ENCODE measurements at regions of chr7 and their contacts with region 1.

Region 1: DNA sequence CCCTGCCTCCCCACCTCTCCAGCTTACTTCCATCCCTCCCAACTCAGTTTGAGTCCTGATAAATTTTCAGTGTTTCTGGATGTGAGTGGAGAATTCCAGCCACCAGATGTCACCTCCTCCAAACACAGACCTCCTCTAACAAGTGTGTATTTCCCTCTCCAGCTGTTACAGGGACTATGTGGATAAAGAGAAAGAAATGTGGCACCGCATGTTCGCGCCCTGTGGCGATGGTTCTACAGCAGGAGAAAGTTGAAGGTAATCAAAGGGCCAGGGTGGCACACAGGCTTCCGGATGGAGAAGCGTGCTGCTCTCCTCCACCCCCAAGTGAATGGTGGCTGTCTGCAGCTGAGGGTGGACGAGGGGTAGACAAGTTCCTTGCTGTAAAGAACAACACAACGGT is 14.7 kb downstream of the FKBP6 start:
- DNase-seq: no peak
- H3K4me3 ChIP-seq: no peak overlapping the region
- H3K27ac ChIP-seq: no peak overlapping the region
- H3K4me1 ChIP-seq: peaks cover 8% of the 10 kb centered on the region; the same call in 1 of the 2 replicates
- H3K27me3 ChIP-seq: no peaks in the 10 kb centered on the region
- CTCF ChIP-seq: peak; percentile 55

Region 2: DNA sequence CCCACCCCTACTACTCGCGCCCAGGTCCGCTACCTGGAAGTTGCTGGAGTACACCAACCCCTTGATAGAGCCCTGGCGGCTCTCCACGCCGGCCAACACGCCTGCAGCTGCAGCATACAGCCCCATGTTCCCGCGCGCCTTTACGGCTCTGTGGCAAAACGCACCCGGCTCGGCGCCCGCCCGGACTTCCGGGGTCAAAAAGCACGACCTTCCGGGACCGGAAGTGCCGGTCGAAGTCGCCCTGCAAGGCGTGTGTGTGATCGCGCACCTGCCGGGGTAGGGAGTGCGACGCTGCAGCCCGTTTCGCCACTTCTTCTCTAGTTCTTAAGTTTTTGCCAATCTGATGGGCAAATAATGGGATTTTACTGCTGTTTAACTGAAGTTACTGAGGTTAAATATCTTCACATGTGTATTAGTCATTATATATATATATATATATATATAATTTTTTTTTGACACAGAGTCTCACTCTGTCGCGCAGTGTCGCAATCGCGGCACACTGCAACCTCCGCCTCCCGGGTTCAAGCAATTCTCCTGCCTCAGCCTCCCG is 33.9 kb before region 1 on chr7 and contains the start of gene NSUN5:
- CTCF ChIA-PET with region 1: no interaction called
- POLR2A ChIA-PET with region 1: no interaction called
- intact Hi-C with region 1: no loop called
- DNase-seq: peak; percentile 76 to 90
- H3K4me3 ChIP-seq: peak within 1 kb of the TSS; percentile 91
- H3K27ac ChIP-seq: 0 out of 2 replicates have a peak within 1 kb of the TSS, but pooled peaks have one; percentile 19
- H3K4me1 ChIP-seq: peaks cover 11% of the 10 kb centered on the region
- H3K27me3 ChIP-seq: no peaks in the 10 kb centered on the region
- CTCF ChIP-seq: no peak
- total RNA-seq, gene NSUN5: 51.6 and 62.2 TPM in 2 replicates

Region 3: GRCh38 chr7:73433924-73434700 is 91.5 kb after region 1 on chr7:
- CTCF ChIA-PET with region 1: no interaction called
- POLR2A ChIA-PET with region 1: no interaction called
- intact Hi-C with region 1: loop called (anchors 5 kb)
- DNase-seq: no peak
- H3K4me3 ChIP-seq: peak overlapping the region; percentile 69; the same call in 1 of the 2 replicates
- H3K27ac ChIP-seq: no peak overlapping the region
- H3K4me1 ChIP-seq: no peaks in the 10 kb centered on the region
- H3K27me3 ChIP-seq: no peaks in the 10 kb centered on the region
- CTCF ChIP-seq: no peak